ENCODE measurements at regions of chr17 and their contacts with region 1.

Region 1: GRCh38 chr17:17663160-17664063 is 17.8 kb upstream of the RAI1 start:
- DNase-seq: peak; percentile 76
- H3K4me3 Mint-ChIP-seq: no peak overlapping the region
- H3K27ac Mint-ChIP-seq: no peak overlapping the region
- H3K4me1 Mint-ChIP-seq: peaks cover 15% of the 10 kb centered on the region
- H3K27me3 Mint-ChIP-seq: peaks cover 38% of the 10 kb centered on the region

Region 2: GRCh38 chr17:17641621-17642409 is 21.6 kb before region 1 on chr17:
- CTCF ChIA-PET with region 1: interaction called, 11 read pairs
- DNase-seq: peak; percentile 86
- H3K4me3 Mint-ChIP-seq: no peak overlapping the region
- H3K27ac Mint-ChIP-seq: no peak overlapping the region
- H3K4me1 Mint-ChIP-seq: peaks cover 2% of the 10 kb centered on the region
- H3K27me3 Mint-ChIP-seq: peaks cover 42% of the 10 kb centered on the region